Caco-2 (cell line): ENCODE measurements at regions of chr2 and their contacts with region 1.

Region 1: DNA sequence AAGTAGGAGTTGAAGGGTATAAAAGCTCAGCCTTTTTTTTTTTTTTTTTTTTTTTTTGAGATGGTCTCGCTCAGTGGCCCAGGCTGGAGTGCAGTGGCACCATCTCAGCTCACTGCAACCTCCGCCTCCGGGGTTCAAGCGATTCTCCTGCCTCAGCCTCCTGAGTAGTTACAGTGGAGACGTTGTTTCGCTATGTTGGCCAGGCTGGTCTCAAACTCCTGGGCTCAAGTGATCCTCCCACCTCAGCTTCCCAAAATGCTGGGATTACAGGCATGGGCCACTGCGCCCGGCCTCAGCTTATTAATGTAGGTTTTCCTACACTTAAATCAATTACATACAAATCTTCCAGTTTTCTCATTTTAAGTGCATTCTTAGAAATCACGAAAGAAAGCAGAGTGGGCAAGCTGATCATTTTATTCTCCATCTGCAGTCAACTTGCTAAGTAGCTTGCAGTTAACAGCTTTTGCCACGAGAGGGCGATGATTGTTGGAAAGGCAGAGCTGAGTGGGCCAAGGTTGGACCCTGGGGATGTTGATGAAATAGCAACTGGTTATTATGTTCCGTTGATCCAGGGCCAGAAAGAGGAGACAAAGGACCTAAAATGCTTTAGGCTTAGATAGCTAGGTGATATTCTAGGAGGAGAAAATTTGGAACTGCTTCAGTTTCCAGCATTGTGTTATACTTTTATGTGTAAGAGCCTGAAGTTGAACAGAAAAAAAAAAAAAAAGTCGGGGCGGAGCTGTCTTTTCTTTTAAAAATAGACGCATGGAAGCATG is 234.4 kb upstream of the EPAS1 start:
- DNase-seq: peak; percentile 75 to 86
- H3K4me3 ChIP-seq: no peak overlapping the region
- H3K4me3 Mint-ChIP-seq: no peak overlapping the region
- H3K27ac Mint-ChIP-seq: no peak overlapping the region
- H3K4me1 ChIP-seq: peaks cover 21% of the 10 kb centered on the region
- H3K4me1 Mint-ChIP-seq: peaks cover 37% of the 10 kb centered on the region
- H3K27me3 ChIP-seq: no peaks in the 10 kb centered on the region
- H3K27me3 Mint-ChIP-seq: no peaks in the 10 kb centered on the region
- CTCF ChIP-seq: peak; percentile 84 to 91

Region 2: DNA sequence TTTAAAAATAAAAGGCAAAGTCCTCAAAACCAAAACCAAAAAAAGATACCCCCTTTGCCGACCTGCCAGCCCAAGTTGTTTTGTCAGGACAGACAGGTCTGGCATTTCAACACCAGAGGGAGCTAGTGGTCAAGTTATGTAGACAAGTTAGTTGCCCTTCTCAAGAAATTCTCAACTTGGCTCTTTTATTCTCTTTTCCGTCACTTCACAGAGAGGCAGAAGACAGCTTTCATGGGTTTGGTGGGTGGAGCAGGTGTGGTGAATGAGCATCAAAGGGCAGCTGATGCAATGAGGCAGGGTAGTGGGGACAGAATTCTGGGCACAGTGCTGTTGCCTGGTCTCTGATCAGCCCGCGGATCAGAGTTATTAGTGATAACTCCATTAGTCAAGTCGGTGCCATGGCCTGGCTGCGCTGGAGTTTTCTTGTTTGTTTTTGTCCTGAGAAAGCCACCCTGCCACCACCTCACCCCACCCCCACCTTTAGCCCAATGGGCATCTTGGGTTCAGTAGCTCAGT is 69.3 kb before region 1 on chr2:
- CTCF ChIA-PET with region 1: interaction called, 14 read pairs
- POLR2A ChIA-PET with region 1: no interaction called
- intact Hi-C with region 1: loop called (anchors 2 kb)
- DNase-seq: peak; percentile 71 to 82
- H3K4me3 ChIP-seq: no peak overlapping the region
- H3K4me3 Mint-ChIP-seq: no peak overlapping the region
- H3K27ac Mint-ChIP-seq: no peak overlapping the region
- H3K4me1 ChIP-seq: no peaks in the 10 kb centered on the region; the same call in 1 of the 2 replicates
- H3K4me1 Mint-ChIP-seq: peaks cover 12% of the 10 kb centered on the region
- H3K27me3 ChIP-seq: no peaks in the 10 kb centered on the region
- H3K27me3 Mint-ChIP-seq: no peaks in the 10 kb centered on the region
- CTCF ChIP-seq: peak; percentile 80 to 83

Region 3: GRCh38 chr2:46010925-46011490 is 51.8 kb before region 1 on chr2:
- CTCF ChIA-PET with region 1: interaction called, 5 read pairs
- POLR2A ChIA-PET with region 1: interaction called, 3 read pairs
- intact Hi-C with region 1: loop called (anchors 5 kb)
- DNase-seq: no peak
- H3K4me3 ChIP-seq: no peak overlapping the region
- H3K4me3 Mint-ChIP-seq: no peak overlapping the region
- H3K27ac Mint-ChIP-seq: no peak overlapping the region
- H3K4me1 ChIP-seq: peaks cover 17% of the 10 kb centered on the region
- H3K4me1 Mint-ChIP-seq: peaks cover 16% of the 10 kb centered on the region
- H3K27me3 ChIP-seq: no peaks in the 10 kb centered on the region
- H3K27me3 Mint-ChIP-seq: no peaks in the 10 kb centered on the region
- CTCF ChIP-seq: peak; percentile 61 to 67

Region 4: DNA sequence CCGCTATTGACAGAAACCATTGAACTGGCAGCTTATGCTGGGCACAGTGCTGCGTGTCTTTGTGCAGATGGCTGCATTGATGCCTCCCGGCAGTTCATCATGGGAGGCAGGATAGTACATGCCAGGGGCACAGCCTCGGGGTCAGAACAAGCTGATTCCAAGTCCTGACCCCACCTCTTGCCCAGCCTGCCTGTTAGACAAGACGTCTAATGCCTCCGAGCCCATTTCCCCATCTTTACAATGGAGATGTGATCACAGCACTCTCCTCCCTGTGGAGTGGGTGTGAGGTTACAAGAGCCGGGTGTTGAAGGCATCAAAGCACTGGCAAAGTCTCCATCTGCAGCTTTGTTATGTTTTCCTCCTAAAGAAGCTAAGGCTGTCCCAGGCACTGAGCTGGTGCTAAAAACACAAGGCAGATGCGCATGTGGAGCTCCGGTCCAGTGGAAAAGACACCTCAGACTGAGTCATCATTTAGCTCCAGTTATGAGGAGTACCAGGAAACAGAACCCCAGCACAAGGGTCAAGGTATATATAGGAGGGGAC is 108.7 kb after region 1 on chr2:
- CTCF ChIA-PET with region 1: interaction called, 6 read pairs
- POLR2A ChIA-PET with region 1: no interaction called
- intact Hi-C with region 1: loop called (anchors 2 kb)
- DNase-seq: no peak
- H3K4me3 ChIP-seq: no peak overlapping the region
- H3K4me3 Mint-ChIP-seq: no peak overlapping the region
- H3K27ac Mint-ChIP-seq: no peak overlapping the region
- H3K4me1 ChIP-seq: peaks cover 79% of the 10 kb centered on the region
- H3K4me1 Mint-ChIP-seq: peaks cover 56% of the 10 kb centered on the region
- H3K27me3 ChIP-seq: no peaks in the 10 kb centered on the region
- H3K27me3 Mint-ChIP-seq: no peaks in the 10 kb centered on the region
- CTCF ChIP-seq: no peak

Region 5: DNA sequence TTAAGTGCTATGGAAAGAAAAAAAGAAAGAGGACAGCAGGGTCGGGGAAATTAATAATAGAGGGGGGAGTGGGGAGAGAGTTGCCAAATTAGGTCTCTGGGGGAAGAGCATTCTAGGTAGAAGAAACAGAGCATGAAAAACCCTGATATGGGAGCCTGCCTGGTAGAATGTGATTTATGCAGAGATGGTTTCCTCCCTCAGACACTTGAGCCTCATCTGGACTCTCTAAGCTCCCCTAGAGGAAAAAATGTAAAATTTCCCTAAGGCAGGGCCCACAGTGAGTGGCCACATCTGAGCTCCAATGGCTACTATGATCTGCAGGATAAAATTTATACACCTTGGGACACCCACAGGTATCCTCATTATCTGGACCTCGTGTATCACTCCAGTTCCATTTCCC is 213.8 kb after region 1 on chr2:
- CTCF ChIA-PET with region 1: interaction called, 11 read pairs
- POLR2A ChIA-PET with region 1: no interaction called
- intact Hi-C with region 1: no loop called
- DNase-seq: no peak
- H3K4me3 ChIP-seq: no peak overlapping the region
- H3K4me3 Mint-ChIP-seq: no peak overlapping the region
- H3K27ac Mint-ChIP-seq: no peak overlapping the region
- H3K4me1 ChIP-seq: peaks cover 12% of the 10 kb centered on the region
- H3K4me1 Mint-ChIP-seq: peaks cover 6% of the 10 kb centered on the region
- H3K27me3 ChIP-seq: no peaks in the 10 kb centered on the region
- H3K27me3 Mint-ChIP-seq: no peaks in the 10 kb centered on the region
- CTCF ChIP-seq: peak; percentile 22 to 30

Region 6: GRCh38 chr2:46461011-46461674 is 398.3 kb after region 1 on chr2:
- CTCF ChIA-PET with region 1: no interaction called
- POLR2A ChIA-PET with region 1: no interaction called
- intact Hi-C with region 1: loop called (anchors 1 kb)
- DNase-seq: peak; percentile 63 to 88
- H3K4me3 ChIP-seq: no peak overlapping the region
- H3K4me3 Mint-ChIP-seq: no peak overlapping the region
- H3K27ac Mint-ChIP-seq: peak overlapping the region; percentile 12
- H3K4me1 ChIP-seq: no peaks in the 10 kb centered on the region
- H3K4me1 Mint-ChIP-seq: peaks cover 5% of the 10 kb centered on the region
- H3K27me3 ChIP-seq: no peaks in the 10 kb centered on the region
- H3K27me3 Mint-ChIP-seq: no peaks in the 10 kb centered on the region
- CTCF ChIP-seq: peak; percentile 97 to 98